H1 (cell line): ENCODE measurements at regions of chr6 and their contacts with region 1.

Region 1: GRCh38 chr6:53986165-53986720 is 125.0 kb upstream of the MLIP start:
- DNase-seq: no peak
- H3K4me3 ChIP-seq: no peak overlapping the region
- H3K27ac ChIP-seq: no peak overlapping the region
- H3K4me1 ChIP-seq: peaks cover 0 to 7% (median under 1%) of the 10 kb centered on the region in 4 experiments; a peak in 3 of 7 replicates
- H3K27me3 ChIP-seq: no peaks in the 10 kb centered on the region
- CTCF ChIP-seq: peak in 2 of 3 experiments; percentile 72 to 74; a peak in 3 of 4 replicates
- EP300 ChIP-seq: no peak
- POLR2A ChIP-seq: no peak
- RAD21 ChIP-seq: peak; percentile 93 to 96

Region 2: DNA sequence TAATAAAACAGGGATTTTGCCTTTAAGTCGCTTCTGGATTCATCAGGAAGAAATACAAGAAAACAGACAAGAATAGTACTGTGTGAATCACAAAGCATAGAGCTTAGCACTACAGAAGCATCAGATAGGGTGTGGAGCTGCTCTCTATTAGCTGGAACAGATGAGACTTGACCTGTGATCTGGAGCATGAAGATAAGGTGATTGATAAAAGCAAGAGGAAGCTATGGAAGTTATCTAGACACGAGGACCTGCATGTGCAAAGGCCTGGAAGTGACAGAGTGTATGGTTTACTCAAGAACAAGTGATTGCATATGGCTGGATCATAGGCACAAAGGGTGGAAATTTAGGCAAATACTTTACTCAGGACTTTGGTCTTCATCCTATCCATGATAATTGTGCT is 12.1 kb after region 1 on chr6:
- CTCF ChIA-PET with region 1: interaction called, 25 read pairs
- POLR2A ChIA-PET with region 1: no interaction called
- DNase-seq: no peak
- H3K4me3 ChIP-seq: no peak overlapping the region
- H3K27ac ChIP-seq: no peak overlapping the region
- H3K4me1 ChIP-seq: no peaks in the 10 kb centered on the region
- H3K27me3 ChIP-seq: peaks cover 0 to 1% (median 0%) of the 10 kb centered on the region in 4 experiments; a peak in 1 of 7 replicates
- CTCF ChIP-seq: no peak
- EP300 ChIP-seq: no peak
- POLR2A ChIP-seq: no peak
- RAD21 ChIP-seq: no peak

Region 3: DNA sequence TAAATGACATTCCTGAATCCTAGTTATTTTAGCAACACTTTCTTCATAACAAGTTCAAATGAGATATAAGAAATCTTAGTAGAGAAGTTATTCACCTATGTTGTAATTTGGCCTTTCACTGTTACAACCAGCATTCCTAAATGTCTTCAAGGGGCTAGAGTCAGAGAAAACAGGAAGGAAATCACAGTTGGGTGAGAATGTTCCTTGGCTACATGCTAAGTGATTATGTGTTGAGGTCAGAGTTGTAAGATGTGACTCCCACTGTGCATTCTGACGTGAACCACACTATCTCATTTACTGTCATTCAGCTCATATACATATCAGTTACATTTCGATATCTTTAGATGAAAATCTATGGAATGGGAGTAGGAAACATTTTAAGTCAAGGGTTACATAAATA is 74.0 kb after region 1 on chr6:
- CTCF ChIA-PET with region 1: no interaction called
- POLR2A ChIA-PET with region 1: no interaction called
- DNase-seq: no peak
- H3K4me3 ChIP-seq: no peak overlapping the region
- H3K27ac ChIP-seq: no peak overlapping the region
- H3K4me1 ChIP-seq: no peaks in the 10 kb centered on the region
- H3K27me3 ChIP-seq: no peaks in the 10 kb centered on the region
- CTCF ChIP-seq: no peak
- EP300 ChIP-seq: no peak
- POLR2A ChIP-seq: no peak
- RAD21 ChIP-seq: no peak

Region 4: DNA sequence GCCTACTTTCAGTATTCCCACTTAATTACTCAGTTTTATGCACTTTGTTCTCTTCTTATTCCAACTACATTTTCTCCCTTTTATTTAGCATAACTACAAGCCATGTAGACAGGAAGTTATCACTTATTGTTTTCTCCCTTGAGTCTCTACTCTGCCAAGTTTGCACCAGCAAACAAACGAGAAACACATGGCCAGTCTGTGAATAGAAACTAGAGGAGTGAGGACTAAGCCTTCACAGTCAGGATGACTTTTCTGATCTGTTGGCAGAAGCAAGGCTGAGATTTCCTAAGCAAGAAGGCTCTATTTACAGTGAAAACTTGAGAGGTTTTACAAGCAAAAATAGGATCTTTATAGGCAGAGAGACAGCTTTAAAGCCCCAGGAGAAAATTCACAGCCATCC is 252.2 kb after region 1 on chr6:
- CTCF ChIA-PET with region 1: interaction called, 36 read pairs
- POLR2A ChIA-PET with region 1: interaction called, 3 read pairs
- DNase-seq: no peak
- H3K4me3 ChIP-seq: no peak overlapping the region
- H3K27ac ChIP-seq: no peak overlapping the region
- H3K4me1 ChIP-seq: no peaks in the 10 kb centered on the region
- H3K27me3 ChIP-seq: no peaks in the 10 kb centered on the region
- CTCF ChIP-seq: no peak
- EP300 ChIP-seq: no peak
- POLR2A ChIP-seq: no peak
- RAD21 ChIP-seq: no peak

Region 5: GRCh38 chr6:54267798-54268197 is 281.6 kb after region 1 on chr6:
- CTCF ChIA-PET with region 1: interaction called, 100 read pairs
- POLR2A ChIA-PET with region 1: no interaction called
- DNase-seq: no peak
- H3K4me3 ChIP-seq: no peak overlapping the region
- H3K27ac ChIP-seq: no peak overlapping the region
- H3K4me1 ChIP-seq: peaks cover 0 to 7% (median 0%) of the 10 kb centered on the region in 4 experiments; a peak in 1 of 7 replicates
- H3K27me3 ChIP-seq: no peaks in the 10 kb centered on the region
- CTCF ChIP-seq: peak in 2 of 3 experiments; percentile 38 to 46; a peak in 3 of 4 replicates
- EP300 ChIP-seq: no peak
- POLR2A ChIP-seq: no peak
- RAD21 ChIP-seq: peak; percentile 50 to 63

Region 6: GRCh38 chr6:54288474-54288873 is 302.2 kb after region 1 on chr6:
- CTCF ChIA-PET with region 1: interaction called, 12 read pairs
- POLR2A ChIA-PET with region 1: no interaction called
- DNase-seq: no peak
- H3K4me3 ChIP-seq: no peak overlapping the region
- H3K27ac ChIP-seq: no peak overlapping the region
- H3K4me1 ChIP-seq: no peaks in the 10 kb centered on the region
- H3K27me3 ChIP-seq: no peaks in the 10 kb centered on the region
- CTCF ChIP-seq: no peak
- EP300 ChIP-seq: no peak
- POLR2A ChIP-seq: no peak
- RAD21 ChIP-seq: no peak